ENCODE measurements at regions of chr10 and their contacts with region 1.

Region 1: GRCh38 chr10:122435212-122435827 is 19.1 kb upstream of the ARMS2 start:
- DNase-seq: no peak

Region 2: DNA sequence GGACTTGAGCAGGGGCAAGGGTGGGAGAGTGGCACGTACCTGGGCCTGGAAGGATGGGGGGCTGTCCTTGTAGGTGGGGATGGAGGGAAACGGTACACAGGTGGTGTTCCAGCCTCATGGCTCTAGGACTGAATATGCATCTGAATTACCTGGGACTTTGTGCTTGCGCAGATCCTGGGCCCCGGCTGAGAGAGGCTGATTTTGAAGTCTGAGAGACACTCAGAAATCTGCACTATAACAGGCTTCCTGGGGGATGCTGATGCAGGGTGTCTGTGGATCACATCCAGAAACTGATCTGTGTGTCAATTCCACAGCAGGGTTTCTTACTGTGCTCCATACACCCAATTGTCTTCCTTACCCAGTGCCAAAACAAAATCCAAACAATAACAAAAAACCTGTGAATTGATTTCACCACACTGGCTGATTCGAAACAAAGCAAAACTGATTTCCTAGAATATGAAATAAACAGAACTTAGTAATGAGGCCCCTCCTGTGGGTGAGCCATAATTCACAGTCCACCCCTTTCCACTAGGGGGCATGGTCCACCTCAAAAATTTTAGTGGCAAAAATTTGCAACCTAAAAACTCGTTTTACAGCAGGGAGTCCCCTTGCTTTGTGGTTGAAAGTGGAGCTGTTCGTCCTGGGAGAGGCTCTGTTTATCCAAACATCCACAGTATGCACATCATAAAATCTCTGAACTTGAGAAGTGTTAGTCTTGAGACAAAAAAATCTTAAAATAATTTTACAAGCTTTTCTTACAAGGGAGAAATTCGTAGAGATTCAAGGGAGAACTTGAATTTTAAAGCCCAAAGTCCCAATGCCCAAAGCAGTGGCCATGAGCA is 92.8 kb before region 1 on chr10:
- CTCF ChIA-PET with region 1: interaction called, 14 read pairs
- POLR2A ChIA-PET with region 1: no interaction called
- DNase-seq: peak; percentile 71